Lower lobe of right lung (tissue), 2 donors: ENCODE measurements at regions of chr1 and their contacts with region 1.

Region 1: GRCh38 chr1:161792740-161793139 is 26.6 kb downstream of the ATF6 start:
- DNase-seq: no peak
- ATAC-seq: peak; percentile 61 to 75
- H3K4me3 ChIP-seq: no peak overlapping the region
- H3K27ac ChIP-seq: no peak overlapping the region
- H3K4me1 ChIP-seq: no peaks in the 10 kb centered on the region
- H3K27me3 ChIP-seq: no peaks in the 10 kb centered on the region
- CTCF ChIP-seq: peak; percentile 57

Region 2: DNA sequence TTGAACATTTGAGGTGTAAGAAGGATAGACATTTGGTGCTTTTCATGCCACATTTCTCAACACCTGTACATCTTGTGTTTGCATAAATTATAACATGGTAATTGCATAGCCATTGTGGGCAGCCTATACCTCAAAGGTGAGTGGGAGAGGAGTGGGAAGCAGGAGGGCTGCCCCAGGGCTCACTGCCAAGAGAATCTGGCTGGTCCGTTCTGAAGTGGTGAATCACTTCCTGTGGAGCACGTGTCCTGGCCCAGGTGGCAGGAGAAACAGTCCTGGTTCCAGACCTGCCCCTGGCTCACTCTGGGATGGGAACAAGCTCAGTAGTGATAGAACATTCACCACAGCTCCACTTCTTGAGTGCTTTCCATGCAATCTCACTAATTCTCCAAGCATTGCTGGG is 242.5 kb after region 1 on chr1:
- intact Hi-C with region 1: loop called (anchors 5 kb)
- DNase-seq: no peak
- ATAC-seq: peak; percentile 19 to 30
- H3K4me3 ChIP-seq: no peak overlapping the region
- H3K27ac ChIP-seq: no peak overlapping the region
- H3K4me1 ChIP-seq: no peaks in the 10 kb centered on the region
- H3K27me3 ChIP-seq: peaks cover 5% of the 10 kb centered on the region
- CTCF ChIP-seq: no peak